ENCODE measurements at regions of chr15 and their contacts with region 1.

Region 1: GRCh38 chr15:81161851-81162250 is 27.8 kb downstream of the CFAP161 start:
- DNase-seq: no peak
- H3K4me3 ChIP-seq: no peak overlapping the region
- H3K27ac ChIP-seq: no peak overlapping the region
- H3K4me1 ChIP-seq: peaks cover 3 to 9% (median 7%) of the 10 kb centered on the region in 4 donors
- H3K27me3 ChIP-seq: no peaks in the 10 kb centered on the region
- CTCF ChIP-seq: no peak
- EP300 ChIP-seq: no peak
- POLR2A ChIP-seq: no peak

Region 2: DNA sequence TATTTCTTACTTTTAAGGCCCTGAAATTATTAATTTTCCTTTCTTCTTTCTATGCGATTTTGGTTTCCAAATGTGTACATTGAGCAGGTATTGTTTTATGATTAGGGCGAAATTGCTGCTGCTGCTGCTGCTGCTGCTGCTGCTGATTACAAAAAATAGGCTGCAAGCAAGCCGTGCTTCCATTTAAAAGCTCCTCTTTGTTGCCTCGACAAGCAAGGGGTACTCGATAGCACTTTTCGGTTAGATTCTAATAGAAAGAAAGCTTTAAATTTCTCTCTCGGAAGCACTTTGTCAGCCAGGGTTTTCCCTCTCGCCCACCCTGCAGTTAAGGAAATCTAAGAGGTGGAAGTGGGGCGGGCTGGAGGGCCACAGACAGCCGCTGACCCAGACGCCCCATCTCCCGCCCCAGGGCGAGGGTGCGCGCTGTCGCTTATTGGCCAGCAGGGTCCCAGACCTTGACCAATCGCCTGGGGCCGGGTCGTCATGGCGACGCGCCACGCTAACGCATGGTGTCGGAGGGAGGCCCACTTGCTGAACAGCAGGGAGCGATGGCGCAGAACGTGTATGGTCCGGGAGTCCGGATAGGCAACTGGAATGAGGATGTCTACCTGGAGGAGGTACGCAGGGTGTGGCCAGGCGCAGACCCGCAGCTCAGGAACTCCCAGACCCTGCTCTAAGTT is 27.9 kb before region 1 on chr15 and contains the start of gene CFAP161:
- in situ Hi-C with region 1: no loop called
- intact Hi-C with region 1: loop called (anchors 1 kb)
- DNase-seq: peak; percentile 44
- H3K4me3 ChIP-seq: peak within 1 kb of the TSS in 2 of 4 donors; percentile 6 to 32
- H3K27ac ChIP-seq: no peak within 1 kb of the TSS
- H3K4me1 ChIP-seq: peaks cover 0 to 6% (median 0%) of the 10 kb centered on the region in 4 donors
- H3K27me3 ChIP-seq: peaks cover 52% of the 10 kb centered on the region
- CTCF ChIP-seq: no peak
- EP300 ChIP-seq: no peak
- POLR2A ChIP-seq: no peak
- total RNA-seq, gene CFAP161: not detected

Region 3: DNA sequence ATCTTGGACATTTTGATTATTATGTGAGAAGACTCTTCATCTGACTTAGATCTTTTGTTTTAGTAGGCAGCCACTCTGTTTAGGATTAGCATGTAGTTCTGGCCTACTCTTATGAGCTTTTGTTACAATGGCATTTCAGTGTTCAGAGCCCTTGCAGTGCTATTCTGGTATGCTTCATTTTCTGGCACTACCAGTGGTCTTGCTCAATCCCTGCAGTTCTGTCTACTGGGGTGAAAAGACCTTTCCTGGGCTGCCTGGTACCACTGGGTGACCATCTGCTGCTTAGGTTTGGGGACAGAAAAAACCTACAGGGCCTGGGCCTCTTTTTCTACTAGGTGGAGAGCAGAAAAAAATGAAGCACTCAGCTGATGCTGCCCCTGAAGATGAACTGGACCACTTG is 77.3 kb after region 1 on chr15:
- in situ Hi-C with region 1: no loop called
- intact Hi-C with region 1: no loop called
- DNase-seq: no peak
- H3K4me3 ChIP-seq: no peak overlapping the region
- H3K27ac ChIP-seq: no peak overlapping the region
- H3K4me1 ChIP-seq: no peaks in the 10 kb centered on the region
- H3K27me3 ChIP-seq: no peaks in the 10 kb centered on the region
- CTCF ChIP-seq: no peak
- EP300 ChIP-seq: no peak
- POLR2A ChIP-seq: no peak